ENCODE measurements at regions of chr19 and their contacts with region 1.

Region 1: DNA sequence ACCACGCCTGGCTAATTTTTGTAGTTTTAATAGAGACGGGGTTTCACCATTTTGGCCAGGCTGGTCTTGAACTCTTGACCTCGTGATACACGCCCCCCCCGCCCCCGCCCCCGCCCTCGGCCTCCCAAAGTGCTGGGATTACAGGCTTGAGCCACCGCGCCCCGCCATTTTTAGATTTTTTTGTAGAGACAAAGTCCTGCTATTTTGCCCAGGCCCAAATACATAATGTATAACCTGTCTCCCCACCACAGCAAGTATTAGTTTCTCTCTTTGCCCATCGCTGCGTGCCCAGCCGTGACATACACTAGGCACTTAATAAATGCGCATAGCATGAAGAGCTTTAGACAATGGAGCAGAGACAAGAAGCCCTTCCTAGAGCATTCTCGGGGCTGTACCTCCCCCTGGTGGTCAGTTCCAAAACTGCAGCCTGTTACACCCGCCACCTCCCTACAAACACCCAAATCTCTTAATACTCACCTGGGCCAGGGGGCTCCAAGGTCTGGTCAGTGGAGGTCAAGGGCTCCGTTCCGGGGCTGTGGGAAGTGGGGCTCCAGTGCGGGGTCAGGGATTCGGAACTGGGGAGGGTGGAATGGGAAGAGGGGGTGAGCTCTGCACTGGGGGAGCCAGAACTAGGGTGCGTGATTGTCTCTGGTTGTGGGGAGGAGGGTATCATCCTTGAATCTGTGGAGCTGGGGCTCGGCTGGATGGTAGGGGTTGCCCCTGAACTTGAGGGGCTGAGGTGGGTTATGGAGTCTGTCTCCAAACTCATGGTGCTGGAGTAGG is 22.5 kb downstream of the IQCN start:
- DNase-seq: peak; percentile 88
- ATAC-seq: peak; percentile 74
- H3K4me3 ChIP-seq: no peak overlapping the region
- H3K4me3 Mint-ChIP-seq: no peak overlapping the region
- H3K27ac ChIP-seq: no peak overlapping the region
- H3K27ac Mint-ChIP-seq: peak overlapping the region; percentile 5
- H3K4me1 ChIP-seq: peaks cover 28 to 38% of the 10 kb centered on the region in 2 donors
- H3K4me1 Mint-ChIP-seq: peaks cover 29% of the 10 kb centered on the region
- H3K27me3 ChIP-seq: peaks cover 0 to 25% (median 2%) of the 10 kb centered on the region in 4 experiments
- H3K27me3 Mint-ChIP-seq: peaks cover 4% of the 10 kb centered on the region
- CTCF ChIP-seq: peak; percentile 87

Region 2: DNA sequence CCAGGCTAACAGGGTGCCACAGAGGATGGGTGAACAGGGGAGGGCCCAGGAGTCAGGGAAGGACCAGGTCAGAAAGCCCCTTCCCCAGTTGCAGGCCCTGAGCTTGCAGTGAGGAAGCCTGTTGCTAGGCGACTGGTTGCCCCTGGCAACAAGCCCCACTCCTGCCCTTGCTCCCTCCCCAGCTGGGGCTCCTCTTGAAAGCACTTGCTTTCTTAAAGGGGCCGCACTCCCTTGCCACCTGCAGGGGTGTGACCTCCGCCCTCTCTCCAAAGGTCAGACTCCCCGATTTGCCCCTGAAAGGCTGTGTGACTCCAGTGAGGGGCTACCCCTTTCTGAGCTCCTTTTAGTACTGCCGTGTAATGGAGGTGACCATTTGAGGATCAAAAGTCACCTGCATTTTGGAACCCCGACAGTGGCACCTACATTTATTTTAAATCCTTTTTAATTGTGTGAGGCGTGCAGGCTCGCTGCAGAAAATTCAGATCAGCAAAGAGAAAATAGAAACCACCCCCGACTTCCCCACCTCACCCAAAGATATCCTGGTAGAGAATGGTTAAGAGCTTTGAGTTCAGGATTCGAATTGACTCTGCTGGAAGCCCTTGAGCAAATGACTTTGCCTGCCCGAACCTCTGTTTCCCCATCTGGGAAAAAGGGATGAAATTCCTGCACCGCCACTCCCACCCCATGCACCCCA is 495.7 kb before region 1 on chr19:
- CTCF ChIA-PET with region 1: no interaction called
- POLR2A ChIA-PET with region 1: no interaction called
- intact Hi-C with region 1: no loop called
- DNase-seq: peak; percentile 82
- ATAC-seq: peak; percentile 4
- H3K4me3 ChIP-seq: peak overlapping the region in 1 of 5 experiments; percentile 34
- H3K4me3 Mint-ChIP-seq: peak overlapping the region; percentile 84
- H3K27ac ChIP-seq: peak overlapping the region; percentile 56 to 70
- H3K27ac Mint-ChIP-seq: peak overlapping the region; percentile 93
- H3K4me1 ChIP-seq: peaks cover 51 to 65% of the 10 kb centered on the region in 2 donors
- H3K4me1 Mint-ChIP-seq: peaks cover 79% of the 10 kb centered on the region
- H3K27me3 ChIP-seq: no peaks in the 10 kb centered on the region
- H3K27me3 Mint-ChIP-seq: no peaks in the 10 kb centered on the region
- CTCF ChIP-seq: no peak

Region 3: GRCh38 chr19:18021121-18021755 is 230.5 kb before region 1 on chr19:
- CTCF ChIA-PET with region 1: no interaction called
- POLR2A ChIA-PET with region 1: no interaction called
- intact Hi-C with region 1: no loop called
- DNase-seq: peak; percentile 84
- ATAC-seq: peak; percentile 22
- H3K4me3 ChIP-seq: peak overlapping the region in 2 of 5 experiments; percentile 18 to 35
- H3K4me3 Mint-ChIP-seq: peak overlapping the region; percentile 79
- H3K27ac ChIP-seq: peak overlapping the region; percentile 95 to 99
- H3K27ac Mint-ChIP-seq: peak overlapping the region; percentile 98
- H3K4me1 ChIP-seq: peaks cover 51 to 64% of the 10 kb centered on the region in 2 donors
- H3K4me1 Mint-ChIP-seq: peaks cover 68% of the 10 kb centered on the region
- H3K27me3 ChIP-seq: no peaks in the 10 kb centered on the region
- H3K27me3 Mint-ChIP-seq: no peaks in the 10 kb centered on the region
- CTCF ChIP-seq: no peak

Region 4: GRCh38 chr19:18097217-18097992 is 154.4 kb before region 1 on chr19 and contains the start of gene MAST3:
- CTCF ChIA-PET with region 1: no interaction called
- POLR2A ChIA-PET with region 1: no interaction called
- intact Hi-C with region 1: loop called (anchors 5 kb)
- DNase-seq: peak; percentile 93
- ATAC-seq: peak; percentile 76
- H3K4me3 ChIP-seq: peak within 1 kb of the TSS; percentile 71 to 95 (median 91)
- H3K4me3 Mint-ChIP-seq: peak within 1 kb of the TSS; percentile 97
- H3K27ac ChIP-seq: peak within 1 kb of the TSS; percentile 82 to 96
- H3K27ac Mint-ChIP-seq: peak within 1 kb of the TSS; percentile 92
- H3K4me1 ChIP-seq: peaks cover 10 to 42% of the 10 kb centered on the region in 2 donors
- H3K4me1 Mint-ChIP-seq: peaks cover 38% of the 10 kb centered on the region
- H3K27me3 ChIP-seq: no peaks in the 10 kb centered on the region
- H3K27me3 Mint-ChIP-seq: no peaks in the 10 kb centered on the region
- CTCF ChIP-seq: no peak
- total RNA-seq, gene MAST3: 85.5 and 90.7 TPM in 2 replicates

Region 5: GRCh38 chr19:18152444-18152816 is 99.3 kb before region 1 on chr19:
- CTCF ChIA-PET with region 1: interaction called, 13 read pairs
- POLR2A ChIA-PET with region 1: no interaction called
- intact Hi-C with region 1: no loop called
- DNase-seq: peak; percentile 100
- ATAC-seq: peak; percentile 71
- H3K4me3 ChIP-seq: peak overlapping the region; percentile 63 to 88 (median 70)
- H3K4me3 Mint-ChIP-seq: peak overlapping the region; percentile 89
- H3K27ac ChIP-seq: peak overlapping the region; percentile 90 to 93
- H3K27ac Mint-ChIP-seq: peak overlapping the region; percentile 95
- H3K4me1 ChIP-seq: peaks cover 14 to 25% of the 10 kb centered on the region in 2 donors
- H3K4me1 Mint-ChIP-seq: peaks cover 23% of the 10 kb centered on the region
- H3K27me3 ChIP-seq: no peaks in the 10 kb centered on the region
- H3K27me3 Mint-ChIP-seq: no peaks in the 10 kb centered on the region
- CTCF ChIP-seq: peak; percentile 88

Region 6: DNA sequence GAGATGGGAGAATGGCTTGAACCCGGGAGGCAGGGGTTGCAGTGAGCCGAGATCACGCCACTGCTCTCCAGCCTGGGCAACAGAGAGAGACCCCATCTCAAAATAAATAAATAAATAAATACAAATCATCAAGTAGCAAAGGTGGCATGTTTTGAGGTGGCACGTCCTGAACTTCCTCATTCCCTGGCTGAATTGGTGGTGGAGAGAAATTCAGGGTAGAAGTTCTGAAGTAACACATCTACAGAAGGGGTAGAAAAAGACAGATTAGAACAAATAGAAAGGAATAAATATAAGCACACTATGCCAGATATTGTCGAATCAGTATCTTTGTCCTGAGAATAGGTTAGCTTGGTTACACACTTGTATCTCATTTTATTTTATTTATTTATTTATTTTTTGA is 71.8 kb before region 1 on chr19:
- CTCF ChIA-PET with region 1: interaction called, 10 read pairs
- POLR2A ChIA-PET with region 1: interaction called, 4 read pairs
- intact Hi-C with region 1: no loop called
- DNase-seq: peak; percentile 55
- ATAC-seq: no peak
- H3K4me3 ChIP-seq: no peak overlapping the region
- H3K4me3 Mint-ChIP-seq: peak overlapping the region; percentile 75
- H3K27ac ChIP-seq: peak overlapping the region in 1 of 2 donors; percentile 21
- H3K27ac Mint-ChIP-seq: peak overlapping the region; percentile 90
- H3K4me1 ChIP-seq: peaks cover 52 to 62% of the 10 kb centered on the region in 2 donors
- H3K4me1 Mint-ChIP-seq: peaks cover 54% of the 10 kb centered on the region
- H3K27me3 ChIP-seq: no peaks in the 10 kb centered on the region
- H3K27me3 Mint-ChIP-seq: no peaks in the 10 kb centered on the region
- CTCF ChIP-seq: no peak

Region 7: GRCh38 chr19:18233224-18233825 is 18.5 kb before region 1 on chr19:
- CTCF ChIA-PET with region 1: interaction called, 37 read pairs
- POLR2A ChIA-PET with region 1: interaction called, 4 read pairs
- intact Hi-C with region 1: no loop called
- DNase-seq: peak; percentile 74
- ATAC-seq: peak; percentile 60
- H3K4me3 ChIP-seq: no peak overlapping the region
- H3K4me3 Mint-ChIP-seq: no peak overlapping the region
- H3K27ac ChIP-seq: no peak overlapping the region
- H3K27ac Mint-ChIP-seq: peak overlapping the region; percentile 32
- H3K4me1 ChIP-seq: peaks cover 21 to 22% of the 10 kb centered on the region in 2 donors
- H3K4me1 Mint-ChIP-seq: peaks cover 20% of the 10 kb centered on the region
- H3K27me3 ChIP-seq: peaks cover 0 to 72% (median 30%) of the 10 kb centered on the region in 4 experiments
- H3K27me3 Mint-ChIP-seq: peaks cover 65% of the 10 kb centered on the region
- CTCF ChIP-seq: no peak

Region 8: DNA sequence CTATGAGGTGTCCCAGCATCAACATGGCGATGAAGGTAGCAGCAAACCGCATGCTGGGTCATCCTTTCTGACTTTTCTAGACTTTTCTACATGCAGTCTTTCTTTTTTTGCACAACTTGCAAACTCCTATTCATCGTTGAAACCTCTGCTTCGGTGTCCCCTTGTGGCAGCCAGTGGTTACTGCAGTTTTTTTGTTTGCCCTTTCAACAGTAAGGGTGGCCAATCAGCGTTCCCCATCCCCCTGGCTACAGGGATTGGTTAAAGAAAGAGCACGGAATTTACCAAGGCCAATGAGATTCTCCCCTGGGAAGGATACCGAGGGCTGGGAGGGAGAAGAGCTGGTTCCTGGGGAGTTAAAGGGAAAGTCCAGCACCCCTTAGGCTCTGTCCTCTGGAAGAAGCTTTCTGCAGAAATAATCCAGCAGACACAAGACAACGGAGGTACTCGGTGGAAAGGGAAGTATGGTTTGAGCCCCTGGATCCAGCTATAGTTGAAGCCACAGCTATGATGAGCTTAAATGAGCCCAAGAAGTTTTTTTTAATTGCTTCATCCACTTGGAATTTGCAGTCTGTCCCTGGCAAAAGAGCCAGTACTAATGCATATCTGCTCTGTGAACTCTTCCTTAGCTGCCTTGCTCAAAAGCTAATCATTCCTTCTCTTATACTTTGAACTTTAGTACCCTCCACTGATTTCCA is 76.7 kb after region 1 on chr19:
- CTCF ChIA-PET with region 1: interaction called, 62 read pairs
- POLR2A ChIA-PET with region 1: interaction called, 5 read pairs
- intact Hi-C with region 1: loop called (anchors 1 kb)
- DNase-seq: peak; percentile 92
- ATAC-seq: peak; percentile 98
- H3K4me3 ChIP-seq: peak overlapping the region; percentile 16 to 62 (median 32)
- H3K4me3 Mint-ChIP-seq: peak overlapping the region; percentile 57
- H3K27ac ChIP-seq: no peak overlapping the region
- H3K27ac Mint-ChIP-seq: no peak overlapping the region
- H3K4me1 ChIP-seq: peaks cover 11 to 15% of the 10 kb centered on the region in 2 donors
- H3K4me1 Mint-ChIP-seq: peaks cover 16% of the 10 kb centered on the region
- H3K27me3 ChIP-seq: peaks cover 0 to 7% (median 0%) of the 10 kb centered on the region in 4 experiments
- H3K27me3 Mint-ChIP-seq: no peaks in the 10 kb centered on the region
- CTCF ChIP-seq: peak; percentile 87

Region 9: GRCh38 chr19:20039203-20039723 is 1787.5 kb after region 1 on chr19 and contains the start of gene ZNF682:
- CTCF ChIA-PET with region 1: no interaction called
- POLR2A ChIA-PET with region 1: no interaction called
- intact Hi-C with region 1: no loop called
- DNase-seq: peak; percentile 96
- ATAC-seq: peak; percentile 100
- H3K4me3 ChIP-seq: peak within 1 kb of the TSS; percentile 30 to 91 (median 83)
- H3K4me3 Mint-ChIP-seq: peak within 1 kb of the TSS; percentile 99
- H3K27ac ChIP-seq: peak within 1 kb of the TSS; percentile 70 to 72
- H3K27ac Mint-ChIP-seq: peak within 1 kb of the TSS; percentile 97
- H3K4me1 ChIP-seq: peaks cover 0 to 9% of the 10 kb centered on the region in 2 donors
- H3K4me1 Mint-ChIP-seq: peaks cover 15% of the 10 kb centered on the region
- H3K27me3 ChIP-seq: peaks cover 0 to 5% (median 0%) of the 10 kb centered on the region in 4 experiments
- H3K27me3 Mint-ChIP-seq: no peaks in the 10 kb centered on the region
- CTCF ChIP-seq: no peak
- total RNA-seq, gene ZNF682: 11.3 and 16.0 TPM in 2 replicates

Measured in B cell (primary cell).